ENCODE measurements at regions of chr18 and their contacts with region 1.

Region 1: DNA sequence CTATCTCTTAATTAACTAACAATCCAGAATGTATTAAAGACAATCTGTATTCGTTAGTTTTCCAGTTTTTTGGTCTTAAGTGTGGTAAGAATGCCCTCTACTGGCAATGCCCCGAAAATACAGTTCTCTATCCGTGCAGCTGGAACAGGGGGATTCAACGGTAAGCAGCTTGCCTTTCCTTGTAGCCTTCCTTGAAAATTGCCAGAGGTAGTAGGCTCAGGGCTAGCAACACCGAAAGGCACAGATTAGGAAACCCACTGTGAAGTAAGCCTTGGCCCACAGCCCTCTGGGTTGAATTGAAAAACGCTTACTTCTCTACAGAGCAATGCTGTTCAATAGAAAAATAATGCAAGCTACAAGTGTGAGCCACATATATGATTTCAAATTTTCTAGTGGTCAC is 17.1 kb upstream of the VPS4B start:
- DNase-seq: peak; percentile 48
- H3K4me3 ChIP-seq: no peak overlapping the region
- H3K27ac ChIP-seq: no peak overlapping the region
- H3K27me3 ChIP-seq: peaks cover 6% of the 10 kb centered on the region
- CTCF ChIP-seq: peak; percentile 88

Region 2: GRCh38 chr18:63131106-63131958 is 308.0 kb before region 1 on chr18:
- CTCF ChIA-PET with region 1: interaction called, 52 read pairs
- POLR2A ChIA-PET with region 1: no interaction called
- DNase-seq: peak; percentile 16
- H3K4me3 ChIP-seq: no peak overlapping the region
- H3K27ac ChIP-seq: no peak overlapping the region
- H3K27me3 ChIP-seq: peaks cover 14% of the 10 kb centered on the region
- CTCF ChIP-seq: peak; percentile 74

Region 3: GRCh38 chr18:63339920-63340484 is 99.3 kb before region 1 on chr18:
- CTCF ChIA-PET with region 1: interaction called, 93 read pairs
- POLR2A ChIA-PET with region 1: no interaction called
- DNase-seq: no peak
- H3K4me3 ChIP-seq: no peak overlapping the region
- H3K27ac ChIP-seq: no peak overlapping the region
- H3K27me3 ChIP-seq: no peaks in the 10 kb centered on the region
- CTCF ChIP-seq: peak; percentile 55

Region 4: GRCh38 chr18:63410792-63411191 is 28.5 kb before region 1 on chr18:
- CTCF ChIA-PET with region 1: interaction called, 11 read pairs
- POLR2A ChIA-PET with region 1: no interaction called
- DNase-seq: peak; percentile 36
- H3K4me3 ChIP-seq: no peak overlapping the region
- H3K27ac ChIP-seq: peak overlapping the region; percentile 33
- H3K27me3 ChIP-seq: no peaks in the 10 kb centered on the region
- CTCF ChIP-seq: no peak

Region 5: DNA sequence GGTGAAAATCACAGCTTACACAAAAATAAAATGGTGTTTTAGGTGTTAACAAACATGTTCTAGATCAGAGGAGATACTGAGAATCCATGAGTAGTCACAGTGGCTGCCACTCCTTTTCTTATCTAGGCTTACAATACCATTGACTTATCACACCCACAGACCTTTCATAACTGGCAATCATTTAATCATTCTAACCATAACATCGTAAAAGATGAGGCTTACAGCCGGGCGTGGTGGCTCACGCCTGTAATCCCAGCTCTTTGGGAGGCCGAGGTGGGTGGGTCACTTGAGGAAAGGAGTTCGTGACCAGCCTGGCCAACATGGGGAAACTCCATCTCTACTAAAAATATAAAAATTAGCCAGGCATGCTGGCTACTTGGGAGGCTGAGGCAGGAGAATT is 18.7 kb after region 1 on chr18:
- CTCF ChIA-PET with region 1: interaction called, 12 read pairs
- POLR2A ChIA-PET with region 1: no interaction called
- DNase-seq: no peak
- H3K4me3 ChIP-seq: no peak overlapping the region
- H3K27ac ChIP-seq: no peak overlapping the region
- H3K27me3 ChIP-seq: no peaks in the 10 kb centered on the region
- CTCF ChIP-seq: no peak

Region 6: DNA sequence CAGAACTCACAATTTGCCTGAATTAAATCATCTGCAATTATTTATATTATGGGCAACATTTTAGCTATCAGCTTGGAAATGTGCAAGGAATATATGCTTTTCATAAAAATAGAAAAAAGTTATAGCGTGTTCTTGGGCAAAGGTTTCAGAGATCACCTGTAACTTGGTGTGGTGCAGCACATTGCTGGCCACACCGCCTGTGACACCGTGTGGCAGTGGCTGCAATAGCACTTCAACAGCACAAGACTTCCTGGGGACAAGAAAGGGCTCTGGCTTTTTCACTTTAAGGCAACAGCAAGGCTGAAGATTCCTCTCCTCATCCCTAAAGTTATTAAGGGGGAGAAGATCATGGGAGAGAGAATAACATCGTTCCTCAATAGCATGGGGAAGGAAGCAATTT is 237.2 kb after region 1 on chr18:
- CTCF ChIA-PET with region 1: no interaction called
- POLR2A ChIA-PET with region 1: no interaction called
- DNase-seq: no peak
- H3K4me3 ChIP-seq: no peak overlapping the region
- H3K27ac ChIP-seq: no peak overlapping the region
- H3K27me3 ChIP-seq: no peaks in the 10 kb centered on the region
- CTCF ChIP-seq: peak; percentile 17; the same call in 1 of the 2 replicates